ENCODE measurements at regions of chr12 and their contacts with region 1.

Region 1: DNA sequence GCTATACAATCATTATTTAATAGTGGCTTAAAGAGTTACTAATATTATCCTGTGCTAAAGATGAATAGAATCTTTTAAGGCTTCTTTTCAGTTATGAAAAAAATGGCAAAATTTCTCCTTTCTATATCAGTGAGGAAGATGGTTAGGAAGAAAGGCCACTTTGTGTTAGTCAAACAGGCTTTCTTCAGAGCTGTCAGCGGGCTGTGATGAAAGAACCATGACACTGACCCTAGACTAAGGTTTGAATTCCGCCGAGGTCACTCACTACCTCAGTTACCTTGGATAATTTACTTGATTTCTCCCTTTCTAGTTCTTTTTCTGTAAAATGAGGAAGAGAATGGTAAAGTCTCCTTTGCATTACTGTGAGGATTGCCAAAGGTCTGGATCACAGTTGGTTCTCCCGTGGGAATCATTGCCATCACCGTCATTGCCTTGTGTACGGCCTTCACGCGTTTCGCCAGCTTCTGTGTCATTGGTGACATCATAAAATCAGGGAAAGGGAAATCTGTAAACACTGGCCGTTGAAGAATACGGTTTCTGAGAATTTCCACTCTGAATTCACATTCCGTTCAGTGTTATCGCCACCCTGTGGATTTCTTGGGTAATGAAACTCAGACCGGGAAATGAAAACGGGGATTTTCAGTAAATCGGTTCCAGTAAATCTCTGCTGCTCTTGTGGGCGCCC is 26.7 kb upstream of the YBX3 start:
- DNase-seq: peak; percentile 69 to 83 (median 71)
- ATAC-seq: peak; percentile 96 to 98
- H3K4me3 ChIP-seq: peak overlapping the region; percentile 18
- H3K27ac ChIP-seq: no peak overlapping the region
- H3K4me1 ChIP-seq: no peaks in the 10 kb centered on the region
- H3K27me3 ChIP-seq: no peaks in the 10 kb centered on the region

Region 2: GRCh38 chr12:10613349-10614055 is 136.3 kb before region 1 on chr12 and contains the start of gene MAGOHB:
- intact Hi-C with region 1: loop called in 1 of 4 experiments (anchors 10 kb)
- DNase-seq: peak; percentile 96 to 99 (median 98)
- ATAC-seq: peak; percentile 100
- H3K4me3 ChIP-seq: peak within 1 kb of the TSS; percentile 98
- H3K27ac ChIP-seq: peak within 1 kb of the TSS; percentile 94
- H3K4me1 ChIP-seq: no peaks in the 10 kb centered on the region
- H3K27me3 ChIP-seq: no peaks in the 10 kb centered on the region
- total RNA-seq, gene MAGOHB: 12.8 to 17.4 (median 14.0) TPM

Region 3: DNA sequence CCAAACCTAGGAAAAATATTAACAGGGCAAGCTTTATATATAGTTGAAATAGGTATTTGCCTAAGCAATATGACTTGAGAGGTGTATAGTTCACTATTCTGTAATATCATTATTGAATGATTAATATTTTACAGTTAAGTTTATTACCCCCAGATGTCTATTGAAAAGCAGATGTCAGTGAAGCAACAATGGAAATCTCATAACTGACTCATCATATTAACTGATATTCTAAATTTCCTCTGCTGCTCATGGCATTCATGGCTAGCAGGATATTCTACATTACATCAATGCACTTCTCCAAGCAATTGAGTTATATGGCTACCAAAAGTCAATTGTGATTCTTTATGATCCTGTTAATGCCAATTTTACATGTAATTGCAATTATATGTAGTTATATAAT is 126.7 kb before region 1 on chr12:
- intact Hi-C with region 1: loop called in 2 of 4 experiments (anchors 10 kb)
- DNase-seq: no peak
- ATAC-seq: no peak
- H3K4me3 ChIP-seq: no peak overlapping the region
- H3K27ac ChIP-seq: no peak overlapping the region
- H3K4me1 ChIP-seq: no peaks in the 10 kb centered on the region
- H3K27me3 ChIP-seq: no peaks in the 10 kb centered on the region

Region 4: GRCh38 chr12:10701131-10701681 is 48.6 kb before region 1 on chr12:
- intact Hi-C with region 1: no loop called
- DNase-seq: no peak
- ATAC-seq: no peak
- H3K4me3 ChIP-seq: no peak overlapping the region
- H3K27ac ChIP-seq: no peak overlapping the region
- H3K4me1 ChIP-seq: peaks cover 2% of the 10 kb centered on the region
- H3K27me3 ChIP-seq: no peaks in the 10 kb centered on the region

Measured in right cardiac atrium (tissue), 5 donors.